ENCODE measurements at regions of chr13 and their contacts with region 1.

Region 1: DNA sequence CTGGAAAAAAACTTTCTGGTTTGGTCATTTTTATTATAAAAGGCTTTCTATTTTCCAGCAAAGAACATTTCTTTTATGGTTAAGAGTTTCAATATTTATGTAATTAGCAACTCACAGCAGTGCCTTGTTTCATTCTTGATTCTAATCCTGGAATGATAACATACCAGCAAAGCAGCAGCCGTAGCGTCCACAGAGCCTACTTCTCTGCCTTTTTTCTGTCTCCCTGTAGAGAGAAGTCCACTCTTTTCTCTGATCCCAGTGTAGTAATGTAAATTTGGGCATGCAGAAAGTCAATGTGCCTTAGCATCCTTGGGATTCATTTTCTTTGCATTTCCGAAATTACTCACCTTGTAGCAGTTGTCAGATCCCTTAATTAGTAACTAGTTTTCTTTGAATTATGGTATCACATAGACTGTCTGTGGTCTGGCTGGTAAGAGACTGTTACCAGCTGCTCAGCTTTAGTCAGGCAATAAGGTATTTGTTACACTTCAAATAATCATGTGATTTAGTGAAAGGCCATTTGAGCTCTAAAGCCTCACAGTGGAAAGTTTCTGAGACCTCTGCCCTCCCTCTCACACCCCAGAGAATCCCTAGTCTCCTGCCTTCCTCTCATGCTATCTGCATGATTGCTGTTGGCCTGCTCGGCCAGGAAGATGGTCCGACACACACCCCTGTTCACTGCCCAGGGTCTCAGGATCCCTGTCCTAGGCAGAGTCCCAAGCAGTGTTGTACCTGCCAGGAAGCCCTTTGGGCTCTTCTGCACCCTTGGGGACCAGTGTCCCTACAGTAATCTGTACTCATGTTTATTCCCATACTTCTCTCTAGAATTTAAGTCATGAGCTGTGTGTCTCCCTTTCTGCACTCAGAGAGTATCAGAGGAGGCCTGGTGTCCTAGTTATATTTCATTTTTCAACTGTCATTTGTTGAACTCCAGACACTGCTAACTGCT is 86.3 kb downstream of the LRCH1 start:
- DNase-seq: no peak
- ATAC-seq: peak; percentile 43
- H3K4me3 Mint-ChIP-seq: peak overlapping the region; percentile 25
- H3K27ac Mint-ChIP-seq: peak overlapping the region; percentile 6
- H3K4me1 Mint-ChIP-seq: peaks cover 86% of the 10 kb centered on the region
- H3K27me3 Mint-ChIP-seq: no peaks in the 10 kb centered on the region
- CTCF ChIP-seq: no peak

Region 2: GRCh38 chr13:46622630-46623256 is 16.6 kb before region 1 on chr13:
- CTCF ChIA-PET with region 1: no interaction called
- POLR2A ChIA-PET with region 1: interaction called, 14 read pairs
- intact Hi-C with region 1: loop called (anchors 2 kb)
- DNase-seq: no peak
- ATAC-seq: no peak
- H3K4me3 Mint-ChIP-seq: peak overlapping the region; percentile 41
- H3K27ac Mint-ChIP-seq: peak overlapping the region; percentile 60
- H3K4me1 Mint-ChIP-seq: peaks cover 94% of the 10 kb centered on the region
- H3K27me3 Mint-ChIP-seq: no peaks in the 10 kb centered on the region
- CTCF ChIP-seq: no peak

Region 3: GRCh38 chr13:46655377-46656180 is 16.3 kb after region 1 on chr13:
- CTCF ChIA-PET with region 1: interaction called, 3 read pairs
- POLR2A ChIA-PET with region 1: interaction called, 3 read pairs
- intact Hi-C with region 1: loop called (anchors 2 kb)
- DNase-seq: no peak
- ATAC-seq: no peak
- H3K4me3 Mint-ChIP-seq: peak overlapping the region; percentile 28
- H3K27ac Mint-ChIP-seq: peak overlapping the region; percentile 70
- H3K4me1 Mint-ChIP-seq: peaks cover 51% of the 10 kb centered on the region
- H3K27me3 Mint-ChIP-seq: no peaks in the 10 kb centered on the region
- CTCF ChIP-seq: no peak

Measured in activated B cell treated with CpG ODN at 0.5 μM for 24 hours (primary cell).